Right cardiac atrium (tissue), 5 donors: ENCODE measurements at regions of chr11 and their contacts with region 1.

Region 1: DNA sequence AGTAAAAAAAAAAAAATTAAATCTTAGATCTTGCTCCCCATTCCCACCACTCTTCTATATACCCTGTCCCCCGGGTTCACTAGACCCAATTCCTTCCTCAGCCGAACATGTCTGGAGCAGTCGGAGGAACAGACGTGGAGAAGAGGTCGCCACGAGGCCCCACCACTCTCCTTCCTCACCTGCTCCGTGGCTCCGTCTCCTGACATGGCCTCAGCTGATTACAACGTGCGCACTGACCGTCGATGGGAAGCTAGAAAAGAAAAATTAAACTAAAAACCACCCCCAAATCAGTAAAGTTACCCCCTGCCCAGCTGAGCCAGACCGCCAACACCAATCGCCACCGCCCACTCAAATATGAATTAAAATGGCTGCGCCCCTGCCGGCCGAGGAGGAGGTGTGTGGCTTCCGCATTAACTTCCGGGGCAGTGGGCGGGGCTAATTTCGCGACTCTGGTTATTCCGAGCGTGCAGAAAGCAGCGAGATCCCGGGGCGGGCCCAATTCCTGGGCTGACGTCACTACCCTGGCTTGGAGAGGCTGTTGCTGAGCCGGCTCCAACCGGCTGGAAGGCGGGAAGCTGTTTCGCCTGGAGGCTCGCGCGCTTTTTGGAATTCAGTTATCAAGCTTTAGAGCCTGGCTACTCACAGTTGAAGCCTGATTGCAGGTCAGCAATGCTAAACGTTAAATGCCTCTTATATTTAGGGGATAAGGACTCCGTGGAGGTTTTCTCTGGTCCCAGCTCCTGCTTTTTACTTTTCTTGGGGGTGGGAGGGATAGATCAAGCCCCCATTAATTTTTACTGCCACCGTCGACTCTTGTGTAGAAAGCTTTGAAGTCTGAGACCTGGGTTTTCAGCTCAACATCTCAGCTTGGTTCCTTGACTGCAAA is at the start of gene CSTF3:
- DNase-seq: peak; percentile 100
- ATAC-seq: peak; percentile 100
- H3K4me3 ChIP-seq: peak within 1 kb of the TSS; percentile 100
- H3K27ac ChIP-seq: peak within 1 kb of the TSS; percentile 89
- H3K4me1 ChIP-seq: peaks cover 2% of the 10 kb centered on the region
- H3K27me3 ChIP-seq: no peaks in the 10 kb centered on the region
- total RNA-seq, gene CSTF3: 11.2 to 18.2 (median 13.2) TPM

Region 2: GRCh38 chr11:32852207-32852606 is 309.2 kb before region 1 on chr11:
- intact Hi-C with region 1: no loop called
- DNase-seq: no peak
- ATAC-seq: peak in 1 of 2 donors; percentile 38
- H3K4me3 ChIP-seq: no peak overlapping the region
- H3K27ac ChIP-seq: no peak overlapping the region
- H3K4me1 ChIP-seq: no peaks in the 10 kb centered on the region
- H3K27me3 ChIP-seq: no peaks in the 10 kb centered on the region

Region 3: GRCh38 chr11:33257897-33258630 is 96.7 kb after region 1 on chr11:
- intact Hi-C with region 1: loop called in 3 of 4 experiments (anchors 10 kb)
- DNase-seq: peak; percentile 92 to 96 (median 96)
- ATAC-seq: peak; percentile 93 to 95
- H3K4me3 ChIP-seq: peak overlapping the region; percentile 90
- H3K27ac ChIP-seq: peak overlapping the region; percentile 100
- H3K4me1 ChIP-seq: peaks cover 2% of the 10 kb centered on the region
- H3K27me3 ChIP-seq: no peaks in the 10 kb centered on the region

Region 4: GRCh38 chr11:33438301-33438700 is 276.9 kb after region 1 on chr11:
- intact Hi-C with region 1: no loop called
- DNase-seq: no peak
- ATAC-seq: no peak
- H3K4me3 ChIP-seq: no peak overlapping the region
- H3K27ac ChIP-seq: no peak overlapping the region
- H3K4me1 ChIP-seq: no peaks in the 10 kb centered on the region
- H3K27me3 ChIP-seq: no peaks in the 10 kb centered on the region